ENCODE measurements at regions of chrX and their contacts with region 1.

Region 1: DNA sequence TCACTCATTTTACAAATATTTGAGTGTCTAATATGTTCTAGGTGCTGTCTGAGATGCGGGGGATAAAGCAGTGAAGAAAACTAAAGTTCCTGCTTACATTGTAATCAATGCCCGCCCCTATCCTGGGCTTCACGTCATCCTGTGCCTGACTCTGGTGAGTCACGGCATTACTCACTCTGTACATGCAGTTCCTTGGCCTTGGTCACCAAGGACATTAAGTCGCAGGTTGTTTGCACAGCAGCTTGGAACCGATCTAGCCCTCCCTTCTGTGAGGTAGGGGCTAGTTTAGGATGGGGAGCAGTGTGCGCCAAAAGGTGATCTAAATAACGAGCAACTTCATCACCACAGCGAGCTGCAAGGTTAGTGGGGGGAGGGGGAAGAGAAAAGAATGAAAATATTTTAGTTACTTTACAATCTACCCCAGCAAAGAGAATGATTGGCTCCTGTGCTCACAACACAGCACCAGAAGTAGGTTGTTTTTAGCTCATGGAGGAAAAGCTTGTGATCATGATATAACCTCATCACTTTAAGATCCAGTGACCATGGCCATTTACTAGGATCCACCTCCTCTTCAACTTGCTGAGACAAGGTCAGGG is 48.0 kb upstream of the HDAC8 start:
- DNase-seq: peak; percentile 42 to 89
- H3K4me3 ChIP-seq: no peak overlapping the region
- H3K27ac ChIP-seq: peak overlapping the region; percentile 71 to 76
- H3K4me1 ChIP-seq: peaks cover 0 to 3% of the 10 kb centered on the region in 2 donors
- H3K27me3 ChIP-seq: no peaks in the 10 kb centered on the region
- CTCF ChIP-seq: no peak

Region 2: GRCh38 chrX:72569786-72570185 is 50.9 kb before region 1 on chrX:
- intact Hi-C with region 1: loop called (anchors 10 kb)
- DNase-seq: no peak
- H3K4me3 ChIP-seq: no peak overlapping the region
- H3K27ac ChIP-seq: no peak overlapping the region
- H3K4me1 ChIP-seq: no peaks in the 10 kb centered on the region
- H3K27me3 ChIP-seq: no peaks in the 10 kb centered on the region
- CTCF ChIP-seq: no peak

Region 3: DNA sequence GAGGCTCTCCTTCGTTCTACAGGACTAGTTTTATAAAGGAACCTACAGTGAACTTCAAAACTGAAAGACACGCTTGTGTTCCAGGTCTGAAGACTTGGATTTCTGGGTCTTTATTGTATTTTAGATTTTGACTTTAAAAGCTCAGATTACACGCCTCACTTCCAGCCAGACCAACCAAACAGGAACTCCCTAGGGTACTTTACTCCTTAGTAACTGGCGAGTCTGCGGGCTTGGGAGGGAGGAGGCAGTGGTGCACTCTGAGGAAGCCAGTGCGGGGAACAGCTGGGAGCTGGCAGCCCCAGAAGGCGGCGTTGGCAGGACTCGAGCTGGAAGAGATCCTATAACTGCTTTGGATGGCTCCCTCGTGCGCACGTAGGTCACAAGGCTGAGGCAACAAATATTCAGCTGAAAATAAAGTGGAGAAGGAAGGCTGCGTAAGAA is 93.8 kb after region 1 on chrX:
- intact Hi-C with region 1: loop called (anchors 5 kb)
- DNase-seq: peak; percentile 52 to 87
- H3K4me3 ChIP-seq: peak overlapping the region; percentile 49 to 69
- H3K27ac ChIP-seq: peak overlapping the region; percentile 82 to 85
- H3K4me1 ChIP-seq: no peaks in the 10 kb centered on the region
- H3K27me3 ChIP-seq: no peaks in the 10 kb centered on the region
- CTCF ChIP-seq: no peak